ENCODE measurements at regions of chr11 and their contacts with region 1.

Region 1: DNA sequence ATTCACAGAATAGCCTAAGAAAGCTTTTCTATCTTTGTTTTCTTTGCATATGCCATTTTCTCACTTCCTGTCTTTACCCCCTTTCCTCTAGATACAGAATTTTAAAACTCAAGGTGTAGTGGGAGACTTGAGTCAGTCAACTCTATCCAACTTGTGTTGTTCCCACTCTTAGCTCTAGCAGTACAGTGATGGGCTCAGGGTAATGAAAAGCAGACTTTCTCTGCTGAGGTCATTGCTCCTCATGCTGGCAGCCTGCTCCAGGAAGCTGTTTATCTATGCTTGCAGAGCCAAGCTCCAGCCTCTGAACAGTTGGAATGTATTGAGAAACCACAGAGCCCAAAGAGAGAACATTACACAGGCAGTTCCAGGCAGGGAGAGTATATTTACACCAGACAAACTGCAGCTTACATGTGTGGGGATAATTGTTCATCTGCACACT is 68.1 kb downstream of the CSTPP1 start:
- DNase-seq: peak; percentile 71 to 86
- ATAC-seq: peak; percentile 99 to 100 (median 100)
- H3K4me3 ChIP-seq: no peak overlapping the region
- H3K27ac ChIP-seq: peak overlapping the region; percentile 77
- H3K4me1 ChIP-seq: peaks cover 19% of the 10 kb centered on the region
- H3K27me3 ChIP-seq: no peaks in the 10 kb centered on the region
- CTCF ChIP-seq: no peak

Region 2: GRCh38 chr11:46916286-46917108 is 88.1 kb before region 1 on chr11:
- intact Hi-C with region 1: loop called in 1 of 2 experiments (anchors 5 kb)
- DNase-seq: peak; percentile 69 to 83
- ATAC-seq: peak; percentile 57 to 65 (median 61)
- H3K4me3 ChIP-seq: peak overlapping the region; percentile 90
- H3K27ac ChIP-seq: peak overlapping the region; percentile 91
- H3K4me1 ChIP-seq: peaks cover 63% of the 10 kb centered on the region
- H3K27me3 ChIP-seq: no peaks in the 10 kb centered on the region
- CTCF ChIP-seq: peak; percentile 21

Region 3: DNA sequence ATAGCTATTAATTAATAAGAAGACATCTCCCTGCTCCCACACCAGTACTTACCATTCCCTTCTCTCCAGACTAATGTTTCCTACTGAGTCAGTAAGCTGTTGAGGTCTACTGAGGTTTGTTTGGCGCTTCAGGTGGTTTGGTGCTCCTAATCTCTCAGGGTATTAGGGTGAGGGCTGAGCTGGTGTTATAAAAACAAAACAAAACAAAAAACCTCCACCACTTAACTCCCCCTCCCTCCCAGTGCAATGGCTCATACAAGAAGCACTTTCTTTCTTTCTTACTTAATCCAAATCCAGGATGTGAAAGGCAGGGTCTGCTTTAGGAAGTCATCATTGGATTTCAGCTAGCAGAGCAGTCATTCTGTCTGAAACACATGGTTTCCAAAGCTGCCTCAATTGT is 52.8 kb before region 1 on chr11:
- intact Hi-C with region 1: no loop called
- DNase-seq: no peak
- ATAC-seq: no peak
- H3K4me3 ChIP-seq: no peak overlapping the region
- H3K27ac ChIP-seq: no peak overlapping the region
- H3K4me1 ChIP-seq: no peaks in the 10 kb centered on the region
- H3K27me3 ChIP-seq: no peaks in the 10 kb centered on the region
- CTCF ChIP-seq: no peak

Measured in psoas muscle (tissue), 8 donors.